Heart left ventricle (tissue), 16 donors: ENCODE measurements at regions of chr5 and their contacts with region 1.

Region 1: GRCh38 chr5:138282920-138283742 is 8.7 kb upstream of the GFRA3 start:
- DNase-seq: peak in 4 of 5 donors; percentile 25 to 43 (median 35)
- ATAC-seq: peak; percentile 72 to 91 (median 88)
- H3K4me3 ChIP-seq: no peak overlapping the region
- H3K27ac ChIP-seq: no peak overlapping the region
- H3K4me1 ChIP-seq: peaks cover 0 to 7% (median 0%) of the 10 kb centered on the region in 12 donors
- H3K27me3 ChIP-seq: no peaks in the 10 kb centered on the region
- CTCF ChIP-seq: peak in 11 of 12 donors; percentile 8 to 60 (median 54)
- POLR2A ChIP-seq: no peak

Region 2: GRCh38 chr5:138078006-138078643 is 205.0 kb before region 1 on chr5:
- intact Hi-C with region 1: no loop called
- DNase-seq: no peak
- ATAC-seq: no peak
- H3K4me3 ChIP-seq: no peak overlapping the region
- H3K27ac ChIP-seq: no peak overlapping the region
- H3K4me1 ChIP-seq: peaks cover 0 to 10% (median 0%) of the 10 kb centered on the region in 12 donors
- H3K27me3 ChIP-seq: no peaks in the 10 kb centered on the region
- CTCF ChIP-seq: no peak
- POLR2A ChIP-seq: no peak

Region 3: GRCh38 chr5:138110266-138110963 is 172.7 kb before region 1 on chr5:
- intact Hi-C with region 1: no loop called
- DNase-seq: no peak
- ATAC-seq: no peak
- H3K4me3 ChIP-seq: no peak overlapping the region
- H3K27ac ChIP-seq: no peak overlapping the region
- H3K4me1 ChIP-seq: no peaks in the 10 kb centered on the region
- H3K27me3 ChIP-seq: peaks cover 0 to 7% (median 0%) of the 10 kb centered on the region in 9 donors
- CTCF ChIP-seq: no peak
- POLR2A ChIP-seq: no peak

Region 4: GRCh38 chr5:138241688-138242571 is 41.2 kb before region 1 on chr5:
- intact Hi-C with region 1: loop called in 1 of 10 experiments (anchors 5 kb)
- DNase-seq: peak in 3 of 5 donors; percentile 29 to 69 (median 35)
- ATAC-seq: peak in 3 of 4 donors; percentile 78 to 86 (median 84)
- H3K4me3 ChIP-seq: peak overlapping the region; percentile 31 to 62 (median 50)
- H3K27ac ChIP-seq: peak overlapping the region in 7 of 12 donors; percentile 7 to 55 (median 42)
- H3K4me1 ChIP-seq: peaks cover 0 to 16% (median 7%) of the 10 kb centered on the region in 12 donors
- H3K27me3 ChIP-seq: peaks cover 0 to 23% (median 0%) of the 10 kb centered on the region in 9 donors
- CTCF ChIP-seq: peak in 2 of 12 donors; percentile 17 to 18
- POLR2A ChIP-seq: no peak

Region 5: DNA sequence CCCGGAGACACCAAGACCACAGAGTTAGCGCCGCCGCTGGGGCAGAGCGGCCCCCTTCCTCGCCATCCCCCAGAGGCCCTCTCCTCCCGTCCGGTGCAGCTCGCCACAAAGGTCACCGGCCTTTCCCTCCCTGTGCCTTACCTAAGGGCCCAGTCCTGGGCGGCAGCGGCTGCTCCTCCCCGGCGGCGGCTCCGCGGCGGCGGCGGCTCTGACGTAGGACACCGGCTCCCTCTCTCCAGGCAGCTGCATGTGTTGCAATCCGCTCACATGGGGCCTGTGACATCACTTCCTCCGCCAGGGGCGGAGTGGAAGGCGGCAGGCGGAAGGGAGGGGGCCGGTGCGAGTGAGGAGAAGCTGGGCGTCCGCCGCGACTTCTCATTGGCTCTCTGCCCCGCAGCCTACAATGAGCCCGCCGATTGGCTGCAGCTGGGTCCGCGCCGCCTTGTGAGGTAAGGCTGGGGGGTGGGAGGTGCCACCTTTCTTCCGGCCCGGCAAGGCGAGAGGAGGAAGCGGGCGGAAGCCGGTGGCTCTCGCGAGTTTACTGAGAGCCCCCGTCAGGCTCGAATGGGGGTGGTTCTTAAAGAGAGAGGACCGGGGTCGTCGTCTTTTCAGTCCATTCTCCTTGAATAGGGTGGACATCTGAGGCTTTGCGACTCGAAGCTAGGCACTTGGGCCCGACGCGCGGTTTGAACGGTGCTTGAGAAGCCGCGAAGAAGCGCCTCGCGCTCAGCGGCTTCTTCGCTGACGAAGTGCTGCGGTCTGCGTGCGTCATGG is 260.0 kb after region 1 on chr5 and contains the start of gene ETF1:
- intact Hi-C with region 1: no loop called
- DNase-seq: peak; percentile 100
- ATAC-seq: peak; percentile 93 to 96 (median 96)
- H3K4me3 ChIP-seq: peak within 1 kb of the TSS; percentile 76 to 95 (median 84)
- H3K27ac ChIP-seq: peak within 1 kb of the TSS; percentile 90 to 100 (median 98)
- H3K4me1 ChIP-seq: peaks cover 17 to 80% (median 63%) of the 10 kb centered on the region in 12 donors
- H3K27me3 ChIP-seq: no peaks in the 10 kb centered on the region
- CTCF ChIP-seq: peak in 2 of 12 donors; percentile 17 to 18
- POLR2A ChIP-seq: peak; percentile 93 to 97
- total RNA-seq, gene ETF1: 52.4 to 116 (median 81.8) TPM

Region 6: GRCh38 chr5:138601444-138601843 is 318.3 kb after region 1 on chr5:
- intact Hi-C with region 1: no loop called
- DNase-seq: no peak
- ATAC-seq: peak in 1 of 4 donors; percentile 54
- H3K4me3 ChIP-seq: no peak overlapping the region
- H3K27ac ChIP-seq: no peak overlapping the region
- H3K4me1 ChIP-seq: peaks cover 0 to 26% (median 0%) of the 10 kb centered on the region in 12 donors
- H3K27me3 ChIP-seq: no peaks in the 10 kb centered on the region
- CTCF ChIP-seq: no peak
- POLR2A ChIP-seq: no peak